Transverse colon (tissue), 4 donors: ENCODE measurements at regions of chr2 and their contacts with region 1.

Region 1: GRCh38 chr2:216404010-216404618 is 8.2 kb upstream of the SMARCAL1 start:
- DNase-seq: peak; percentile 36
- H3K4me3 ChIP-seq: no peak overlapping the region
- H3K27ac ChIP-seq: no peak overlapping the region
- H3K4me1 ChIP-seq: no peaks in the 10 kb centered on the region
- H3K27me3 ChIP-seq: peaks cover 16% of the 10 kb centered on the region
- CTCF ChIP-seq: peak; percentile 63 to 83 (median 74)
- EP300 ChIP-seq: no peak
- POLR2A ChIP-seq: no peak

Region 2: GRCh38 chr2:214830794-214831346 is 1573.2 kb before region 1 on chr2:
- in situ Hi-C with region 1: no loop called
- intact Hi-C with region 1: loop called (anchors 5 kb)
- DNase-seq: no peak
- H3K4me3 ChIP-seq: no peak overlapping the region
- H3K27ac ChIP-seq: no peak overlapping the region
- H3K4me1 ChIP-seq: no peaks in the 10 kb centered on the region
- H3K27me3 ChIP-seq: no peaks in the 10 kb centered on the region
- CTCF ChIP-seq: peak in 3 of 5 experiments; percentile 20 to 26 (median 24)
- EP300 ChIP-seq: no peak
- POLR2A ChIP-seq: no peak

Region 3: DNA sequence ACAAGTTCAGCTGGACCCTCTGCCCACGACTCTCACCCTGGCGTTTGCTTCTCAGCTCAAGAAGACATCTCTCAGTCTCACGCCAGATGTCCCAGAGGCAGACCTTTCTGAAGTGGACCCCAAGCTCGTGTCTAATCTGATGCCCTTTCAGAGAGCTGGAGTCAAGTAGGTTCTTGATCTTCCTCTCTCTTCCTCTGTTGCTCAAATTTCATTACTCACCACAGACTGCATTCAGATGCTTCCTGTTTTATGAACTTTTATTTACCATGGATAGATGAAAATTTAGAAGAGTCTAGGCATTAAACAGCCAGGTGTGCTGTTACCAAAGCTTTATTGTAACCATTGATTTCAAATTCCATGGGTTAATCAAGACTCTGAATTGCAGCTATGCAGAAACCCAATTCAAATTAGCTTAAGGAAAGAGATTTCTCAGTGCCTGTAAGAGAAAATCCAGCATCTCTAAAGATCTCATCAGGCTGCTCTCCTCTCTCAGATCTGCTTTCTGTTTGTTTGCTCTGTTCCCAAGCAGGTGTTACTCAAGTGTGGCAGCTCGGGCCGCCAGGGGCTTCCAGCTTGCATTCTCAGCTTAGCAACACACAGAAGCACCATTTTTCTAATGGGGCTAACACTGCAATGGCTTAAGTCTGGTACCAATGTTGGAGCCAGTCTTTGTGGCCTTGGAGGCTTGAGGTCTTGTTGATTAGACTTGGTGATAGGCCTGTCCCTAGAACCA is 24.7 kb after region 1 on chr2:
- in situ Hi-C with region 1: no loop called
- intact Hi-C with region 1: no loop called
- DNase-seq: no peak
- H3K4me3 ChIP-seq: no peak overlapping the region
- H3K27ac ChIP-seq: no peak overlapping the region
- H3K4me1 ChIP-seq: no peaks in the 10 kb centered on the region
- H3K27me3 ChIP-seq: no peaks in the 10 kb centered on the region
- CTCF ChIP-seq: no peak
- EP300 ChIP-seq: no peak
- POLR2A ChIP-seq: no peak